BJ (cell line): ENCODE measurements at regions of chr13 and their contacts with region 1.

Region 1: DNA sequence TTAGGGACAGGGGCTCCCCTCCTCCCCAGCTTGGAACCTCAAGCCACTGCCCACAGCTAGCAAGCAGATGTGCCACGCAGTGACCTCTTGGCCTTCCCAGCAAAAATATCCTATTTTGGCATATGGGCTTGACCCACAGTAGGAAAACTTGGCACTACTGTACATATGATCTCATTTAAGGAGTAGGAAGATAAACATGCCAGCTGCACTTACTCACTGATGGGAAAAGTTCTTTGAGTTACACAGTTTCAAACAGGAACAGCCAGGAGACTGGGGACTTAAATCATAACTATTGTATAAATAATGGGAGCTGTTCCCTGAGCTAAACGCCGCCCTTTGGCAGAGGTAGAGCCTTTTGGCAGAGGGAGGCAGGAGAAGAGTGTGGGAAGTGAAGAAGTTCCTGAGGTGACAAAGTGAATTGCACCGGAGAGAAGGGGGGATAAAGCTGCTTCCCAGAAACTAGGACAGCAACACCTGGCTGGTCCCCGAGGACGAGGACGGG is 6.1 kb downstream of the SACS start:
- DNase-seq: peak; percentile 78
- H3K4me3 ChIP-seq: no peak overlapping the region
- H3K27me3 ChIP-seq: no peaks in the 10 kb centered on the region
- CTCF ChIP-seq: no peak

Region 2: DNA sequence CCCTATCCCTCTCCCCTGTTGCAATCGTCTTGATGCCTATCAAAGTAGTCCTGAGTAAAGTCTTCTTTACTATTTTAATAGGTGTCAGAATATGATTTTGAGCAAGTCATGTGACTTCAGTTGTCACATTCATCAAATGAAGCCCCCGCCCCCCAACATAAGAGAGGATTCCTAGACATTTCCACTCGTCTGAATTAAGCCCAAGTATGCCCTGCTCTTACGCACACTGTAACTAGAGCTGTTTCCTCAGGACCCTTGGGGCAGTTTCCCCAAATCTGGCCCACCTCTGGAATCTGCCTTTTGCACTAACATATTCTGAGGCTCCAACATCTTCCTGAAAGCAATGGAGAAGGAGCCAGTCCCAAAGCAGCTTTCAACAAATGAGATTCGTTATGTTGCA is 19.4 kb before region 1 on chr13:
- CTCF ChIA-PET with region 1: interaction called, 10 read pairs
- POLR2A ChIA-PET with region 1: no interaction called
- DNase-seq: no peak
- H3K4me3 ChIP-seq: no peak overlapping the region
- H3K27me3 ChIP-seq: no peaks in the 10 kb centered on the region
- CTCF ChIP-seq: no peak

Region 3: DNA sequence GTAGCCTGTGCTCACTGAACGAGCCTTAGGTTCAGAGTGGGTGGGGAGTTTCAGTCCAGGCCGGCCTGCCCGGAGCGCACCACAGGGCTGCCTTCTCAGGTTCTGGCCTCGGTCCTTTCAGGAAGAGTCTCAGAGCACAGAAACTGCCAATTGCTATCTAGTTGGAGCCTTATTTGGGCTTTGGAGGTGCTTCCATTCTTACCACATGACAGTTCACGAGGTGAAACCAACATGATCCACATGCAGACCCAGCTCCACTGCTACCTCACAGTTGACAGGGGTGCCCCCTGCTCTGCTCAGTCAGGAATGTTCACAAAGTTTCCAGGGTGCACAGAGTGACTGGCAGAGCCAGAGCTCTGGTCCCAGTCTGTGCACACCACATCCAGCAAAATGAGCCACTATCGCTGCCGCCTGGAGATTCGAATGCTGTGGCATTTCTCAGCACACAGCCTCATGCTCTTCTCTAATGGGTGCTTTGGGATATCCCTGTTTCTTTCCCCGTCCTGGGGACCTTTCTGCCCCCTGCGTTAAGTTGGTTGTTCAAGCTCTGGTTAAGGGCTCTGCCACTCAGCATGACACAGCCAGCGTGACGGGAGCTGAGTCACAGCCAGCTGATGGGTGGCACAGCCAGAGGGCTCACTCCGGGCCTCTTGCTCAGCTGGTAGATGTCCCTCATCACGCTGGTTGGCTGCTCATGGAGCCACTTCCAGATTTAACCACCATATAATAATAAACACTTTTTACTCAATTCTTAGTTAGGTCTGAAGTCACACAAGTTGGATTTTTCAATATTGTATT is 13.6 kb after region 1 on chr13:
- CTCF ChIA-PET with region 1: no interaction called
- POLR2A ChIA-PET with region 1: no interaction called
- DNase-seq: no peak
- H3K4me3 ChIP-seq: no peak overlapping the region
- H3K27me3 ChIP-seq: peaks cover 2% of the 10 kb centered on the region; the same call in 1 of the 2 replicates
- CTCF ChIP-seq: no peak

Region 4: GRCh38 chr13:23622985-23623384 is 195.6 kb after region 1 on chr13:
- CTCF ChIA-PET with region 1: no interaction called
- POLR2A ChIA-PET with region 1: no interaction called
- DNase-seq: no peak
- H3K4me3 ChIP-seq: no peak overlapping the region
- H3K27me3 ChIP-seq: no peaks in the 10 kb centered on the region
- CTCF ChIP-seq: no peak